ENCODE measurements at regions of chr4 and their contacts with region 1.

Region 1: GRCh38 chr4:113761620-113762185 is at the start of gene CAMK2D:
- DNase-seq: no peak
- ATAC-seq: peak; percentile 79
- H3K4me3 ChIP-seq: peak within 1 kb of the TSS; percentile 73 to 97
- H3K27ac ChIP-seq: peak within 1 kb of the TSS; percentile 93
- H3K4me1 ChIP-seq: peaks cover 8% of the 10 kb centered on the region
- H3K27me3 ChIP-seq: no peaks in the 10 kb centered on the region
- CTCF ChIP-seq: peak; percentile 79
- total RNA-seq, gene CAMK2D: 29.5 TPM

Region 2: GRCh38 chr4:113394730-113395530 is 366.8 kb before region 1 on chr4:
- CTCF ChIA-PET with region 1: no interaction called
- POLR2A ChIA-PET with region 1: no interaction called
- in situ Hi-C with region 1: no loop called
- intact Hi-C with region 1: loop called (anchors 5 kb)
- DNase-seq: peak; percentile 77
- ATAC-seq: peak; percentile 100
- H3K4me3 ChIP-seq: no peak overlapping the region
- H3K27ac ChIP-seq: peak overlapping the region; percentile 61; the same call in 1 of the 2 replicates
- H3K4me1 ChIP-seq: peaks cover 3% of the 10 kb centered on the region; the same call in 1 of the 2 replicates
- H3K27me3 ChIP-seq: no peaks in the 10 kb centered on the region
- CTCF ChIP-seq: peak; percentile 72

Region 3: DNA sequence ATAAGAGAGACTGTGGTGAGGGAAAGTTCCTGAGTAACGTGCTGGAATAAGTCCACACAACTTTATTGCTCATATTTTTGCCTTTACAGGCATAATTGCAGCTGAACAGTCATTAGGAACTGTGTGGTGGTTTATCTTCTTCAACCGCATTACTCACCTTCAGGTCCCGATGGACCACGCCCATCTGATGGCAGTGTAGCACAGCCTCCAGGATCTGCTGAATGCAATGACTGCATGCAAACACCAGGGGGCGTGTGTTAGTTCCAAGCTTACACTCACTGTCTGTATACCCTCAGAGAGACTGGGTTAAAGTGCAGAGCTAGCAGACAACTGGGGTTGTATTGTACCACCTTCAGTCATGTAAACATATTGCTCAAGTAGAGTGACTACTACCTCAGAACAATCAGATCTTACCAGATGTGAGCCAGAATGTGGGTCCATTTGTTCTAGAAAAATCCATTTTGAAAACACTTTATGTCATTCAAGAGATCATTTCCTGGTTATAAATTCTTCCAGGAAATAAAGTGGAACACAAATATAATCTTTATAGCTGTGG is 214.1 kb before region 1 on chr4:
- CTCF ChIA-PET with region 1: no interaction called
- POLR2A ChIA-PET with region 1: no interaction called
- in situ Hi-C with region 1: no loop called
- intact Hi-C with region 1: loop called (anchors 2 kb)
- DNase-seq: peak; percentile 92
- ATAC-seq: peak; percentile 100
- H3K4me3 ChIP-seq: no peak overlapping the region
- H3K27ac ChIP-seq: peak overlapping the region; percentile 51; the same call in 1 of the 2 replicates
- H3K4me1 ChIP-seq: peaks cover 11% of the 10 kb centered on the region
- H3K27me3 ChIP-seq: no peaks in the 10 kb centered on the region
- CTCF ChIP-seq: peak; percentile 86

Region 4: DNA sequence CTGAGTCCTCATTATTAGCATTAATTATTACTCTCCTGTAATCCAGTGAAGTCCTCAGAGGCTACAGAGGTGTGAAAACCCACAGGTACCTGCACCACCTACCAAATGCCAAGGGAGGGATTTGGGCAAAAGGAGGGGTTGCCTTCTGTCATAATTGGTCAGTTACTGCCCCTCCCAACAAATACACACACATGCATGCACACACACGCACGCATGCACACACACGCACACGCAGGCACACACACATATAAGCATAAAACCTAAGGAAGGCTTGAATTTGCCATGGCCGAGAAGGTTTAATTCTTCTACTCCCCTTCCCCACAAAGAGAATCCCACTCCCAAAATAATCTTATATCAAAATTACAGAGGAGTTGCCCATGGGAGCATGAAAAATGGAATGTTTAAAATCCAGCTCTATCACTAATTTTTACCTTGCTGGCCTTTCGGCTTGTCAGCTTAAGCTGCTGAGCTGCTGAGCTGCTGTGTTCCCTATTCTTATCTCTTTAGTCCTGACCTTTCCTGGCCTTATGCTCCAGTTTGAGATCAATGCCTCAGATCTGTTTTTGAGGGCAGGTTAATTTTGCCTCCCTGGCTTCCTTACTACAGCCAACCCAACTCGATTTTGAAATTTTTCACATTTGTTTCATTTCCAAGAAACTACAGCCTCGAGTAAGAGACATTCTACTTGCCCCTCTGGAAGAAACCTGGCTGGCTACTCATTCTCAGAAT is 95.2 kb before region 1 on chr4:
- CTCF ChIA-PET with region 1: no interaction called
- POLR2A ChIA-PET with region 1: no interaction called
- in situ Hi-C with region 1: no loop called
- intact Hi-C with region 1: no loop called
- DNase-seq: no peak
- ATAC-seq: no peak
- H3K4me3 ChIP-seq: no peak overlapping the region
- H3K27ac ChIP-seq: no peak overlapping the region
- H3K4me1 ChIP-seq: no peaks in the 10 kb centered on the region; the same call in 1 of the 2 replicates
- H3K27me3 ChIP-seq: no peaks in the 10 kb centered on the region
- CTCF ChIP-seq: no peak

Measured in Panc1 (cell line).